ENCODE measurements at regions of chr1 and their contacts with region 1.

Region 1: GRCh38 chr1:201396861-201397464 is 2.2 kb downstream of the LAD1 start:
- DNase-seq: no peak
- CTCF ChIP-seq: no peak

Region 2: DNA sequence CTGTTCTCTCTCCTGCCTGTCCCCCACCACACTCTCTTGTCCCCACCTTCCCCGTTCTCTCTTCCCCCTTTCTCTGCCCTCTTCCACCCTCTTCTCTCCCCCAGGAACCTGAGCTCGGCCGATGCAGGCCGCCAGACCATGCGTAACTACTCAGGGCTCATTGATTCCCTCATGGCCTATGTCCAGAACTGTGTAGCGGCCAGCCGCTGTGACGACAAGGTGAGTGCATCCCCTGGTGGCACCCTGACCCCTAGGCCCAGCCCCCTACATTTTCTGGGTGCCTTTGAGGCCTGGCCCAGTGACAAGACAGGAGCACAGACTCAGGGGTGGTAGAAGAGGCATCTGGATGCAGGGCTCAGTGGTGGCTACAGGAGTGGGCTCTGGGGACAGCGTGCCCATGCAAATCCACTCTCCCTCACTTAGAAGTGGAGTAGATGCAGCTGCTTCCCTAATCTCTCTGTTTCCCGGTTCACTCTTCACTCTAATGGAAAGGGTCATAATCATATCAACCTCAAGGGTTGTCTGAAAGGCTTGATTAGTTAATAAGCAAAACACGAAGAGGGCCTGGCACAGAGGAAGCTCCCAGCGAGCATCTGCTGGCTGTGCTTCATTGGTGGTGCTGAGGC is 76.7 kb before region 1 on chr1:
- CTCF ChIA-PET with region 1: no interaction called
- POLR2A ChIA-PET with region 1: no interaction called
- DNase-seq: no peak
- CTCF ChIP-seq: no peak

Region 3: DNA sequence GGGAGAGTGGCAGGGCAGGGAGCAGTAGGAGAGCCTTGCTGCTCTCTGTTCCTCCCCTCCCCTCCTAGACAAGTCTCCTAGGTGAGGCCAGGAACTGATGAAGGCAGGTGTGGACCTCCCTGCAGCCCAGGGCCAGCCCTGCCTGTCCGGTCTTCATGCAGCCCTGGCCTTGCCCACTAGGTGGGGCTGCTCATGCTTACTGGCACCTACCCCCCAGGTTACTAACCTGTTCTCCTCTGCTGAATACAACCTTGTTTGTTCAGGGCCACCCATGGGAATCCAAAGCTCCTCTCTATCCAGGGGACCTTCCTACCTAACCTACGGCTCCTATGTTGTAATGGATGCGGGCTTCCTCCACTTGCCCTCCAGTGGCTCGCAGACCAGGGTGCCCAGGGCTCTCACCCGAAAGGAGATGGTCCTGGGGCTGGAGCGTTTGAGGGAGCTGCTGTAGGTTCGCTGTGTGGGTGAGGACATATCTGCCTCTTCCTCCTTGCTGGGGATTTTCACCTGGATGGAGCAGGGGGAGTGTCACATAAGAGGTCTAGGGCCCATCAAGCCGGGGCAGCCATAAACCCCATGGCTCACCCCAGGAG is 11.6 kb before region 1 on chr1:
- CTCF ChIA-PET with region 1: interaction called, 45 read pairs
- POLR2A ChIA-PET with region 1: no interaction called
- DNase-seq: peak; percentile 85
- CTCF ChIP-seq: peak; percentile 87

Measured in GM10248 (cell line).